ENCODE measurements at regions of chr11 and their contacts with region 1.

Region 1: DNA sequence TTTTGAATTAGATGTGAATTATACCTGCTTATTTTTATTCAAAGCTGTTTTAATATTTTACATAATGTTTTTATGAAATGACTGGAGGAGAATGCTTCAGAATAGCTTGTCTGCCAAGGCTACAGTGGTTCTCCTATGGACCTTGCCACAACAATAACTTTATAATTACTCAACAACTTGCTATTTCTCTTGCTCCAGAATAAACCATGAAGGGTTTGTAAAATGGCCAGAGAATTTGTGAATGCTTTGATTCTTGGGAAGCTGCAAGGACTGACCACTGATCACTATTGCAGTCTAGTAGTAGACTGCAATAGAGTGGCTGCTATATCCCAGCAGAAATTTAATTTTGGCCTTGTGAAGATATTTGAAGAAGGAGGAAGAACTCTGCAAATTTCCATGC is 199.7 kb downstream of the FAT3 start:
- DNase-seq: no peak
- H3K4me3 ChIP-seq: no peak overlapping the region
- CTCF ChIP-seq: no peak
- POLR2A ChIP-seq: no peak

Region 2: GRCh38 chr11:91686700-91687099 is 737.6 kb before region 1 on chr11:
- intact Hi-C with region 1: no loop called
- DNase-seq: no peak
- H3K4me3 ChIP-seq: no peak overlapping the region
- CTCF ChIP-seq: no peak
- POLR2A ChIP-seq: no peak

Region 3: DNA sequence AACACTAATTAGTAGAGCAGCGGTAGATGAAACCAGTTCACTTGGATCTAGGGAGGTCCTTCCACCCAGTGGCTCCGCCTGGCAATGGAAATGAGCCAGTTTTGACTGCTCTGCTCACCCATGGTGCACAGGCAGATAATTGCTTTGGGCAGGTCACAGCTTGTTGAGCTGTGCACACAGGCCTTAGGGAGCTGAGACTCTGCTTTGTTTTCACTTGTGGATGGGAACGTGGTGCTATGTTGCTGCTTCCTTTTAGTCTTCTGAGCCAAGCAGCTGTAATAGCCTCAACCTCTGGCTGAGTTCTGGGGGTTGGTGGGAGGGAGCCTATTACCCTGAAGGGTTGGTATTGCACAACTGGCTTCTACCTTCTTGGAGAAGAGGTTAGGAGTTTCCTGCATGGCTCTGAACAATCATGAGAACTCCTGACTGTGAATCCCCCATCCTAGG is 282.9 kb after region 1 on chr11:
- intact Hi-C with region 1: loop called (anchors 10 kb)
- DNase-seq: peak; percentile 76 to 84
- H3K4me3 ChIP-seq: no peak overlapping the region
- CTCF ChIP-seq: no peak
- POLR2A ChIP-seq: no peak

Region 4: GRCh38 chr11:92811341-92811740 is 387.1 kb after region 1 on chr11:
- intact Hi-C with region 1: no loop called
- DNase-seq: no peak
- H3K4me3 ChIP-seq: no peak overlapping the region
- CTCF ChIP-seq: no peak
- POLR2A ChIP-seq: no peak

Region 5: GRCh38 chr11:93849751-93850593 is 1425.7 kb after region 1 on chr11:
- intact Hi-C with region 1: no loop called
- DNase-seq: no peak
- H3K4me3 ChIP-seq: peak overlapping the region; percentile 21
- CTCF ChIP-seq: no peak
- POLR2A ChIP-seq: no peak

Measured in lower leg skin (tissue), 4 donors.